ENCODE measurements at regions of chr6 and their contacts with region 1.

Region 1: DNA sequence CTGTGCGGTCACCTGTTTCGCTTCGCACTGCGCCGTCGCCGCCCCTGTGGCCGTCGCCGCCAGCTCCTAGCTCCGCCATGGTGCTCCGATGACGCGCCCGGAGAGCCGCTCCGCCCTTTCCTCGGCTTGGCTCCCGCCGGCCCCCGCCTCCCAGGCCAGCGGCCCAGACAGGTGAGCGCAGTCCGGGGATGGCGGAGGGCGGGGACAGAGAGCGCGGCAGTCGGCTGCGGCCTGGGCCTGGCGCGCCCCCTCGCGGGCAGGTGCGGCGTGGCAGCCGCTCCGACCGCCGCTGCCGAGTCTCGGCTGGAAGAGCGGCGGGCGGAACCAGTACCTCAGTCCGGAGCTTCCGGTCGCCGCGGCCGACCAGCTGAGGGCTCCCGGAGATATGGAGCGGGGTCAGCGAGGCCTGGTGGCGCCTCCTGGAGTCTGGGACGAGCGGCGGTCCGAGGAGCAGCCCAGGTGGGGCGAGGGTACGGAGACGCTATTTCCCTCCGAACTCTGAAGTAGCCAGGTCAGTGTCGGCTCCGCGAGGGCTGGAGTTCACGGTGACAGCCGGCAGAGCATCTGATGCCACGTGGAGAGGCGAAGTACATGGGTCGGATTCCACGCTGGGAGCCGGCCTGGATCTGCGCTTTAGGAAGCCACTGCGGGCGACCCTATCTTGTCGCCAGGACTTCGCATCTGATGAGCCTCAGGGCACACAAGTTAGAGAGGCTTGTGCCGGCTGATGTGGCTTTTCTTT is at the start of gene MAP7:
- DNase-seq: peak; percentile 53 to 74 (median 61)
- H3K4me3 ChIP-seq: peak within 1 kb of the TSS; percentile 60 to 88 (median 81)
- H3K27ac ChIP-seq: peak within 1 kb of the TSS in 1 of 2 experiments; percentile 46
- H3K4me1 ChIP-seq: peaks cover 0 to 34% (median 21%) of the 10 kb centered on the region in 4 experiments
- H3K27me3 ChIP-seq: peaks cover 0 to 2% (median 0%) of the 10 kb centered on the region in 5 experiments

Region 2: GRCh38 chr6:136334853-136335252 is 215.6 kb before region 1 on chr6:
- CTCF ChIA-PET with region 1: no interaction called
- POLR2A ChIA-PET with region 1: no interaction called
- DNase-seq: peak; percentile 6 to 51 (median 33)
- H3K4me3 ChIP-seq: no peak overlapping the region
- H3K27ac ChIP-seq: no peak overlapping the region
- H3K4me1 ChIP-seq: no peaks in the 10 kb centered on the region
- H3K27me3 ChIP-seq: no peaks in the 10 kb centered on the region

Region 3: GRCh38 chr6:136365776-136366354 is 184.6 kb before region 1 on chr6:
- CTCF ChIA-PET with region 1: interaction called, 12 read pairs
- POLR2A ChIA-PET with region 1: no interaction called
- DNase-seq: peak; percentile 77 to 95 (median 92)
- H3K4me3 ChIP-seq: peak overlapping the region in 3 of 7 experiments; percentile 47 to 54 (median 52)
- H3K27ac ChIP-seq: peak overlapping the region; percentile 21 to 73
- H3K4me1 ChIP-seq: peaks cover 8 to 21% (median 15%) of the 10 kb centered on the region in 4 experiments
- H3K27me3 ChIP-seq: no peaks in the 10 kb centered on the region

Region 4: GRCh38 chr6:136371959-136372358 is 178.5 kb before region 1 on chr6:
- CTCF ChIA-PET with region 1: interaction called, 12 read pairs
- POLR2A ChIA-PET with region 1: no interaction called
- DNase-seq: peak in 2 of 3 donors; percentile 34 to 43
- H3K4me3 ChIP-seq: peak overlapping the region in 2 of 7 experiments; percentile 38
- H3K27ac ChIP-seq: peak overlapping the region in 1 of 2 experiments; percentile 44
- H3K4me1 ChIP-seq: peaks cover 0 to 21% (median 8%) of the 10 kb centered on the region in 4 experiments
- H3K27me3 ChIP-seq: no peaks in the 10 kb centered on the region

Region 5: DNA sequence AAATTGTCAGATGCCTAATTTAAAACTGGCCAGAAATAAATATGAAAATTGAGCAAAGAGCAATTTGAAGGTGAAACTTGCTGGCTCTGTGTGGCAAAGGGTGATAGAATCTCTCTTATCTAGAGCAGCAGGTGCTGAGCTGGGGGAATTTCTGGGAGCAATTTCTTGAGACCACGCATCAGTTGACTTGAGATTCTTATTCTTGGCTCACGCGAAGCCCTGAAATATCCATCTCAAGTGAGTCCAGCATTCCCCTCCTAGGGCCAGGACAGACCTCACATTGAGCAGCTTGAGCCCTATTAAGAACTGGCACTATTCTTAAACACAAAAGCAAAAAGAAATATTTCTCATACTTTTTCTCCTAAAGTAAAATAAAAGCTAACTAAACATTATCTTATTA is 66.6 kb before region 1 on chr6:
- CTCF ChIA-PET with region 1: no interaction called
- POLR2A ChIA-PET with region 1: no interaction called
- DNase-seq: peak in 2 of 3 donors; percentile 21 to 48
- H3K4me3 ChIP-seq: no peak overlapping the region
- H3K27ac ChIP-seq: no peak overlapping the region
- H3K4me1 ChIP-seq: peaks cover 0 to 5% (median under 1%) of the 10 kb centered on the region in 4 experiments
- H3K27me3 ChIP-seq: no peaks in the 10 kb centered on the region

Region 6: DNA sequence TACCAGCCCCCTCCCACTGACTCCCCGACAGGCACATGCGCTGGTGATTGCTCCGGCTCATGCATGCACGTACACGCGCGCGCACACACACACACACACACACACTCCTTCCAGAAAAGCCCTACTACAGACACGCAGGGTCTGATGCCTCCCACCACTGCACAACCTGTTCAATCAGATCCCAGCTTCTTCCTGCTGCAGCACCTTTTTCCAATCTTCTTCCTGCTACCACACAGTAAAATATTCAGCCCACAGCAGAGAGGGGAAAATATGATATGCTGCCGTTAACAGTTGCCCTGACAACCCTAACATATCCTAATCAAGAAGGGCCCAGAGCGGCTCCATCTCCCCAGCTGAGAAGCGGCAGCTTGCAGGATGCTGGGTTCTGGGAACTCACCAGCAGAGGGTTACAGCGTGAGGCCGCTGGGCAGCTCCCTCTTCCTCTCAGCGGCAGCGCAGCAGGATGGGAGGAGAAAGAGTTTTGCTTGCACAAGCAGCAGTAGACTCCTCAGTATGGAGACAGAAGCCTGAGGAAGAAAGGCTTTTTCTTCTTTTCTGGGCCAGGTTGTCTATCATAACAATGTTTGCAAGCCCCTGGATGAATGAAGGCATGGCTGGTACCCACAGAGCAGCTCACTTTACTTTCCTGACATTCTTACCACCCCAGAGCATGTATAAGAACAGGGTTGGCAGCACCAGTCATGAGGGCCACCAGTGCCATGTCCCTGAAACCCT is 24.1 kb before region 1 on chr6:
- CTCF ChIA-PET with region 1: interaction called, 33 read pairs
- POLR2A ChIA-PET with region 1: interaction called, 6 read pairs
- DNase-seq: peak; percentile 83 to 93 (median 90)
- H3K4me3 ChIP-seq: peak overlapping the region; percentile 23 to 80 (median 63)
- H3K27ac ChIP-seq: peak overlapping the region; percentile 67 to 82
- H3K4me1 ChIP-seq: peaks cover 12 to 65% (median 46%) of the 10 kb centered on the region in 4 experiments
- H3K27me3 ChIP-seq: no peaks in the 10 kb centered on the region

Region 7: GRCh38 chr6:136539967-136540652 is 10.4 kb before region 1 on chr6:
- CTCF ChIA-PET with region 1: interaction called, 19 read pairs
- POLR2A ChIA-PET with region 1: no interaction called
- DNase-seq: no peak
- H3K4me3 ChIP-seq: no peak overlapping the region
- H3K27ac ChIP-seq: no peak overlapping the region
- H3K4me1 ChIP-seq: peaks cover 7 to 16% (median 14%) of the 10 kb centered on the region in 4 experiments
- H3K27me3 ChIP-seq: no peaks in the 10 kb centered on the region

Region 8: GRCh38 chr6:136566007-136566496 is 15.6 kb after region 1 on chr6:
- CTCF ChIA-PET with region 1: interaction called, 89 read pairs
- POLR2A ChIA-PET with region 1: no interaction called
- DNase-seq: peak; percentile 44 to 93 (median 85)
- H3K4me3 ChIP-seq: peak overlapping the region in 2 of 7 experiments; percentile 1 to 19
- H3K27ac ChIP-seq: peak overlapping the region; percentile 34 to 78
- H3K4me1 ChIP-seq: peaks cover 35 to 80% (median 66%) of the 10 kb centered on the region in 4 experiments
- H3K27me3 ChIP-seq: no peaks in the 10 kb centered on the region

Measured in common myeloid progenitor, CD34-positive (primary cell).